Right ventricle myocardium inferior (tissue), 1 donor: ENCODE measurements at regions of chr10 and their contacts with region 1.

Region 1: GRCh38 chr10:63241841-63242281 is 108.7 kb downstream of the NRBF2 start:
- DNase-seq: no peak
- ATAC-seq: no peak

Region 2: DNA sequence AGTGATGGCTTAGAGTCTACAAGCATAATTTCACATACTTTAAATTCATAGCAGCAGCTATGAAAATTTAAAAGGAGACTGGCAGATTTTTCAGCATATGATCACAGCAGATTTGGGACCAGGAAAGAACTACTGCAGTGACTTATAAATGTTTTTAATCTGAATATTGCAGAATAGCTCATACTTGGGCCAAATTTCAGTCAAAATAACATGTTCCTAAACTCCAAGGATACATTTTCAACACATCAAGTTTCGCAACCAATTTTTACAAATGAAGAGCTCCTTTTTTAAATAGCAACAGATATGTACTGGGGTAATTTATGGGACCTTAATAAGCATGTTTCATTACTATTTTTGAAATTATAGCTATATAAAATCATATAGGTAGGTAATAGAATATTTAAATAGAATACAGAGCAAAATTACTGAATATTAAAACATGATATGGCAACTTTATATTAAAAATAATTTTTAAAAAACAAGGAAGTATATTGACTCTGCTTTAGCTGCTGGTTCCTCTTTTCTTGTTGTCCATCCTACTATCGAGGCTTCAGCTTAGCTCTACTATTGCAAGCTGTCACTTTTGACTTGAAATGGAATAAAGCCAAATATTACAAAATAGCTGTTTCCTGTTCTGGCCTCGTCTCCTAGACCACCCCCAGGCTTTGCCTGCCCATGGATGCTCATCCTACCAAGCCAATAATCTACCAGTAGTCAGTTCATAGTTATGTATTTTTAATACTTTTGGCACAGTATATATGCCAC is 14.3 kb after region 1 on chr10:
- intact Hi-C with region 1: loop called (anchors 2 kb)
- DNase-seq: no peak
- ATAC-seq: peak; percentile 82

Region 3: GRCh38 chr10:63273580-63273979 is 31.7 kb after region 1 on chr10:
- intact Hi-C with region 1: no loop called
- DNase-seq: no peak
- ATAC-seq: no peak

Region 4: GRCh38 chr10:63348227-63348850 is 106.5 kb after region 1 on chr10:
- intact Hi-C with region 1: no loop called
- DNase-seq: no peak
- ATAC-seq: no peak